Right cardiac atrium (tissue), 5 donors: ENCODE measurements at regions of chr4 and their contacts with region 1.

Region 1: DNA sequence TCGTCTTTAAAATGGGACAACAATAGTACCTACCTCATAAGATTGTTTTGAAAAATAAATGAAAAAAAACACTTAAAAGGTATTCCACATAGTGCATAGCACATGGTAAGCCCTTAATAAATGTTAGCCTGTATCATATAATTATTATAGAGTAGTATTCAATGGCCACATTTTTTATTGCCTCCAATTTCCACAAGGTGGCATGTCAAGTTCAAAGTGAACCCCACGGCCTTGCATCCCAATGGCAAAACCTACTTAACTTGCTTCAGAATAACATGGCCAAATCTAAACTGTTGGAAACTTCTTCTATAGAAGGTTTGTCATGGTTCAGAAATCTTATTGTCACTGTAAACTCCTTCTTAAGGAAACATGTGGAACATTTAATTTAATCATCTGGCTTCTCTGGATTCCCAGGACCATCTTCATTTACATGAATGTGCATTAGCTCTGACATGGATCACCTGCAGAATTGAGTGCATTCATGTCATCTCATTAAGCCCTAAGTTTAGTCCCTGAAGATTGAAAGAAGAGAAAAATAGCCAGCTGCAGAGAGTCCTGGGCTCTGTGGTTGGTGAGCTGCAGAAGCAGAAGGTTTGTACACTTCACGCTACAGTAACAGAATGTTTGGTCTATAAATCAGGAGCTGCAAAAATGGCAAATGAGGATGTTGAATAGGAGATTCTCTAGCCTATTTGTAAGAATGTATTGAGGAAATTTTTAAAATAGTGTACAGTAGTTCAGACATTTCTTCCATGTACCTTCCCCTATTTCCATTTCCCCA is 61.0 kb downstream of the ANXA3 start:
- DNase-seq: peak in 1 of 3 donors; percentile 46
- ATAC-seq: peak; percentile 66 to 72
- H3K4me3 ChIP-seq: no peak overlapping the region
- H3K27ac ChIP-seq: no peak overlapping the region
- H3K4me1 ChIP-seq: peaks cover 2% of the 10 kb centered on the region
- H3K27me3 ChIP-seq: no peaks in the 10 kb centered on the region

Region 2: DNA sequence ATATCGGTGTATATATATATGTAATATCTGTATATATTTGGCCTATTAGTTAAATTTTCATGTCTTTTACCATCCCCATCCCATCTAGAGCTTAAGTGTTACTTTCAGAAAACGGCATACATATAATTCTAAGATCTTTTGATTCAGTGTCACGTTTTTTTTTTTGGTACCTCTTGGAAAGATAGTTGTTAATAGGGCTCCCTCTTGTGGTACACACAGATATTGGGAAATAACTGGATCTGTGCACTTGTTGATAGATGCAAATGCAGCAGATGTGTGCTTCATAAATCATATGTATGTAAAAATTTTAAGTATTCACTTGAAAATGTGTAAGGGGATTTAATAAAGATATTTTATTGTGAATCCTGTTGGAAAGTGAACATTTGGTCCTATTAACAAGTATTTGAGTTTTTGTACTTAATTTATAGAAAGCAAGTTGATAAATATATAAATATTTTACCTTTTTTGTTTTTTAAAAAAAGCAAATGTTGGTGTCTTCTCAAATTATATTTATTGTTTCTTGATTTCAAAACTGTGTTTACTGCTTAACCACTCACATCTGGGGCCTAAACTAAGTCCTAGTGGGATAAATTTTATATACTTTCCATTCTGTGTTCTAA is 251.9 kb after region 1 on chr4:
- intact Hi-C with region 1: loop called (anchors 1 to 5 kb)
- DNase-seq: no peak
- ATAC-seq: peak; percentile 59 to 61
- H3K4me3 ChIP-seq: no peak overlapping the region
- H3K27ac ChIP-seq: no peak overlapping the region
- H3K4me1 ChIP-seq: no peaks in the 10 kb centered on the region
- H3K27me3 ChIP-seq: no peaks in the 10 kb centered on the region